Heart left ventricle (tissue), 16 donors: ENCODE measurements at regions of chr16 and their contacts with region 1.

Region 1: DNA sequence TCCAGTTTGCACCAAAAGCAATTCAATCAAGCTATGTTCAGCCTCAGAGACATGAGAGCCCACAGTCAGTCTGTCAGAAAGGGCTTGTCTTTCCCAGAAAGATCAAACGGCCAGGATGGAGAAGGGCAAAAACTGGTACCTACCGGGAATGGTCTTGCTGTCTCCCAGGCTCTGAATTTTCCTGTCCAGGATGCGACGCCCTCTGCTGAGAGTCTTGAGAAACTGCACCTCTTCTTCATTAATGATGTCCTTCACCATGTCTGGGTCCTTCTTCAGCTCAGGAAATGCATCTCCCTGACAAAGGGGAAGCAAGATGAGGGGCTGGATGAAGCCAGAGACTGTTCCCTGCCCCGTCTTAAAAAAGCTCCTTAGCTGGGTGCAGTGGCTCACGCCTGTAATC is 15.8 kb upstream of the EXOSC6 start:
- DNase-seq: no peak
- ATAC-seq: peak in 1 of 4 donors; percentile 41
- H3K4me3 ChIP-seq: no peak overlapping the region
- H3K27ac ChIP-seq: no peak overlapping the region
- H3K4me1 ChIP-seq: no peaks in the 10 kb centered on the region
- H3K27me3 ChIP-seq: no peaks in the 10 kb centered on the region
- CTCF ChIP-seq: peak; percentile 43 to 68 (median 58)
- POLR2A ChIP-seq: no peak

Region 2: DNA sequence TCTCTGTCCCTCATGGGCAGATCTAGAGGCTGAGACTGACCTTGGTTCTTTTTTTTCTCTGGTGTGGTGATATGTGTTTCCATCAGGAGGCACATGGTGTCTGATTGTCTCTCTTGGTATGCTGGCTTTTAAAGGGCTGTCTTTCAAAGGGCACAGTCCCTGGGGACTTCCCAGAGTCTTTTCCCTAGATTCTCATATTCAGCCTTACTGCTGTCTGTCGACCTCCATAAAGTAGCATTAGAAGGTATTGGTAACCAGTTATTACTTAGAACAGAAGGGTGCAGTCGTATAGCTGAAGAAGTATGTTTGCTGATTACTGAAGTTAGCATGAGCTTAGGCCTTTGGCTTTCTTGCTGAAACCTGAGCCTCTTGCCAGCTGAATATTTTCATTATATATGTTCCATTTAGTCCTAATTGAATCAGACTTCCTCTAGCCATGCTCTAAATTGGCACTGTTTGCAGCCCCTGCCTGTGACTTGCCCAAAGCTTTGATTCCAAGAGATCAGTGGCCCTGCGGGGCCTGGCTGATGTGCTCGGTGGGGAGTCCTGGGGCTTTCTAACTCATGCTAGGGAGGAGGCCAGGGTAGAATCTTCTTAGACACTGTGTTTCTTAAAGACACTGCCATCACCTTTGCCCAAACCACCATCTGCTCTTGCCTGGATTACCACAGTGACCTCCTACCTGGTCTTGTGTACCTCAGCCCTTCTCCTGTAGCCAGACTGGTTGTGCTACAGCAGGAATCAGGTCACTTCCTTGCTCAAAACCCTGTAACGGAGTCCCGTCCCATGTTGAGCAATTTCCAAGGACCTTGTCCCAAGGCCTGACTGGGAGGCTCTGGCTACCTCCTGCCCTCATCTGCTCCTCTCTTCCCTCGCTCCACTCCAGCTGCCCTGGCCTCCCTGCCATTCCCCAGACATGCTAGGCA is 433.9 kb before region 1 on chr16:
- intact Hi-C with region 1: no loop called
- DNase-seq: no peak
- ATAC-seq: peak; percentile 48 to 70 (median 58)
- H3K4me3 ChIP-seq: no peak overlapping the region
- H3K27ac ChIP-seq: peak overlapping the region in 10 of 12 donors; percentile 12 to 72 (median 42)
- H3K4me1 ChIP-seq: peaks cover 6 to 55% (median 36%) of the 10 kb centered on the region in 12 donors
- H3K27me3 ChIP-seq: no peaks in the 10 kb centered on the region
- CTCF ChIP-seq: no peak
- POLR2A ChIP-seq: no peak

Region 3: GRCh38 chr16:70162041-70162451 is 105.5 kb before region 1 on chr16:
- intact Hi-C with region 1: loop called in 4 of 10 experiments (anchors 10 kb)
- DNase-seq: no peak
- ATAC-seq: no peak
- H3K4me3 ChIP-seq: no peak overlapping the region
- H3K27ac ChIP-seq: no peak overlapping the region
- H3K4me1 ChIP-seq: no peaks in the 10 kb centered on the region
- H3K27me3 ChIP-seq: no peaks in the 10 kb centered on the region
- CTCF ChIP-seq: no peak
- POLR2A ChIP-seq: no peak

Region 4: GRCh38 chr16:70402916-70403659 is 135.6 kb after region 1 on chr16:
- intact Hi-C with region 1: no loop called
- DNase-seq: no peak
- ATAC-seq: no peak
- H3K4me3 ChIP-seq: no peak overlapping the region
- H3K27ac ChIP-seq: no peak overlapping the region
- H3K4me1 ChIP-seq: peaks cover 0 to 31% (median 5%) of the 10 kb centered on the region in 12 donors
- H3K27me3 ChIP-seq: no peaks in the 10 kb centered on the region
- CTCF ChIP-seq: no peak
- POLR2A ChIP-seq: no peak